ENCODE measurements at regions of chr16 and their contacts with region 1.

Region 1: DNA sequence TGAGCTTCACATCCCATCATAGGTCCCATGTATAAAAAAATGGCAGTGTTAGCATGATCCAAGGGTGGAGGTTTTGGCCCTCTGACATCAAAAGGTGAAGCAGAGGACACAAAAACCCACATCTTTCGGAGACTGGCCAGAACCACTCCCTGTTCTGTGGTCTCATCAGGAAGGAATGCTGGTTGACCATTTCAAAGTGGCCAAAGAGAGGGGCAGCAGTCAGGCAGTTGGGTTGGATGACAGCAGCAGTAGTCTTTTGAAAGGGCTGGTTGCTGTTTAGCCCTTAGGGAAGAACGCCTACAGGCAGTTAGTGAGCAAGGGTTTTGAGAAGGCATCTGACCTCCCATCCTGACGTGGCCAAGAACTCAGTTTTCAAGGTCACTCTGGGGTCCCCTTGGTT is 40.5 kb downstream of the LCMT1 start:
- DNase-seq: no peak
- H3K4me3 ChIP-seq: no peak overlapping the region
- H3K27ac ChIP-seq: no peak overlapping the region
- H3K27me3 ChIP-seq: no peaks in the 10 kb centered on the region
- CTCF ChIP-seq: no peak

Region 2: DNA sequence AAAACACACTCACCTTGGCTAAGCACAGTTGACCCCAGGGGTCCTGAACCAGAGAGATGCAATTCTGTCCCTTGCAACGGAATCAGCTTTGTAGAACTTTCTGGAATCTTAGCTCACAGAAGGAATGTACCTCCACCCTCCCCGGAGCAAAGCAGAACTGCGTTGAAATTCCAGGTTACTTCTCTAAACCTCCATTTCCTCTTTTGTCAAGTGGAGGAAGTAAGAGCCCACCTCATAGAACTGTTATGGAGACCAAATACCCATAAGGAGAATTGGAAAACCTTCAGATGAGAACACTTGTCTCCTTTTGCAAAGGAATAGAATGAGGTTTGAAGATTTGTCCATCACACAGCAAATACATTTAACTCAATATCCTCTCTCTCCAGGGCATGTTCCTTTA is 699.3 kb before region 1 on chr16:
- CTCF ChIA-PET with region 1: no interaction called
- POLR2A ChIA-PET with region 1: no interaction called
- DNase-seq: no peak
- H3K4me3 ChIP-seq: no peak overlapping the region
- H3K27ac ChIP-seq: no peak overlapping the region
- H3K27me3 ChIP-seq: no peaks in the 10 kb centered on the region
- CTCF ChIP-seq: no peak

Region 3: DNA sequence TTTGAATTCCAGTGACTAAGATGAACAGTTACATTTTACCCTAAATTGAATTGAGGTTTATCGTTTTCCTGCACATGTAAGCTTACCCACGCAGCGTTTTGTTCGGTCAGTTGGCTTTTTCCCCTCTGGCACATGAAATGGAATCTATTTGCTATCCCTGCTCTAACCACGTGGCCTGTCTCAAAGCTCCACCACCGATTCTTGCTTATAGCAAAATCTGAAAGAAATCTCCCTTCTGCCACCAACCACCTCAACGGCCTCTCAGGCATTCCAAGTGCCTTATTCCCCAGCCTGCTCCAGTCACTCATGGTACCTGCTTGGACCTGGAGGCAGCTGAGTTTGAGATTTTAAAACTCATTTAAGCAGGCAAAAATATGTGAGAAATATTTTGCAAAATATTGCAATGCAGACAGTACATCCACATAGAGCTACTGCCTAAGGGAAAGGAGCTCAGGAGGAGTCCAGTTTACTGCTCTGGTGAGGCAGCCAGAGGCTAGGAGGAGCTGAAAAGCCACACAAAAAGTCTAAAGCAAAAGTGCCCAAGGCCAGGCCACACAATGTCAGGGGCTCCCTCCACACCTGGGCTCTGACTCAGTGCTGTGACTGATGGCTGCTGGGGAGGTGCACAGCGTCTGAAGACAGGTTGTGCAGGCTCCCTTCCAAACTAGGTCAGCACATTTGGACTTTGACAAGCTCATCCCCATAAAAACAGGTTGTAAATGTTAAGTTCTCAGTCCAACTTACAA is 163.2 kb before region 1 on chr16:
- CTCF ChIA-PET with region 1: no interaction called
- POLR2A ChIA-PET with region 1: no interaction called
- DNase-seq: no peak
- H3K4me3 ChIP-seq: peak overlapping the region; percentile 12
- H3K27ac ChIP-seq: peak overlapping the region; percentile 88
- H3K27me3 ChIP-seq: no peaks in the 10 kb centered on the region
- CTCF ChIP-seq: no peak

Region 4: GRCh38 chr16:25066747-25067631 is 85.0 kb before region 1 on chr16:
- CTCF ChIA-PET with region 1: no interaction called
- POLR2A ChIA-PET with region 1: no interaction called
- DNase-seq: no peak
- H3K4me3 ChIP-seq: peak overlapping the region; percentile 84
- H3K27ac ChIP-seq: peak overlapping the region; percentile 80
- H3K27me3 ChIP-seq: no peaks in the 10 kb centered on the region
- CTCF ChIP-seq: no peak

Region 5: GRCh38 chr16:25135254-25135878 is 16.6 kb before region 1 on chr16:
- CTCF ChIA-PET with region 1: interaction called, 10 read pairs
- POLR2A ChIA-PET with region 1: no interaction called
- DNase-seq: peak; percentile 63
- H3K4me3 ChIP-seq: no peak overlapping the region
- H3K27ac ChIP-seq: peak overlapping the region; percentile 42
- H3K27me3 ChIP-seq: no peaks in the 10 kb centered on the region
- CTCF ChIP-seq: peak; percentile 67

Region 6: DNA sequence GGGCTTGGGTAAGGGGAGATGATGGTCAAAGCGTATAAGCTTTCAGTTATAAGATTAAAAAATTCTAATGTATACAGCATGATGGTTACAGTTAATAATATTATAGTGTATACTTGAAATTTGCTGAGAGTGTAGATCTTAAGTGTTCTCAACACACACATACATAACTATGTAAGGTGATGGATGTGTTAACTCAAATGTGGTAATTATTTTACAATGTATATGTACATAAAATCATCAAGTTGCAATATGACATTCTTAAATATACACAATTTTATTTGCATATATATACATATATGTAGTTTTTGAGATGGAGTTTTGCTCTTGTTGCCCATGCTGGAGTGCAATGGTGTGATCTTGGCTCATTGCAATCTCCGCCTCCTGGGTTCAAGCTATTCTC is 98.5 kb after region 1 on chr16:
- CTCF ChIA-PET with region 1: no interaction called
- POLR2A ChIA-PET with region 1: no interaction called
- DNase-seq: no peak
- H3K4me3 ChIP-seq: no peak overlapping the region
- H3K27ac ChIP-seq: no peak overlapping the region
- H3K27me3 ChIP-seq: no peaks in the 10 kb centered on the region
- CTCF ChIP-seq: no peak